A549 (cell line): ENCODE measurements at regions of chr3 and their contacts with region 1.

Region 1: DNA sequence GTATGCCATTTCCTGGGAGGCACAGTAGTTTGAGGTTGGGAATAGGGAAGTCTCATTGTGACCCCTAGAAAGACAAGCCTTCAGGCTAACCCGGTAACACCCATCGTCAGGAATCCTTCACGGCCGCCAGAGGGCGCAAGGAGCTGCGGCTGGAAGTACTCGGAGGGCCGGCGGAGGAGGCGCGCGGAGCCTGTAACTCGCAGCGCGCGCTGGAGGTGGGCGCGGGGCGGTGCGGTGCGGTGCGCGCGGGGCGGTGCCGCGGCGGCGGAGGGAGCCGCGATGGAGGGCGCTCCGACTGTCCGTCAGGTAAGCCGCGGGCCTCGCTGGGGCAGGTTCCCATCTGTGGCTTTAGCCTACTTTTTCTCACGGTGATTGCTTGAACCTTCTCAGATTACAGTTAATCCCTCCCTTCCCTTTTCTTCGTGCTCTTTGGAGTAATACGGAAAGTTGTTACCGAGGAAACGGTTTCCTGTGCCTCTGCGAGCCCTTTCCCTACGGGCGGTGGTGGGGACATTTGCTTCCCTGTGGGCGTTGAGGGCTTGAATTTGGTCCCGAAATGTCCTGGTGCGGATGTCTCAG is at the start of gene GRAMD1C:
- DNase-seq: peak; percentile 75 to 89
- ATAC-seq: peak; percentile 99 to 100
- H3K4me3 ChIP-seq: peak within 1 kb of the TSS; percentile 51
- H3K27ac ChIP-seq: peak within 1 kb of the TSS; percentile 44 to 78; a peak in 4 of 6 replicates
- H3K4me1 ChIP-seq: no peaks in the 10 kb centered on the region
- CTCF ChIP-seq: peak; percentile 87
- EP300 ChIP-seq: no peak
- POLR2A ChIP-seq: 0 out of 2 replicates have a peak, but pooled peaks have one; percentile 23
- RAD21 ChIP-seq: peak; percentile 68 to 76
- polyA plus RNA-seq, gene GRAMD1C: 0.59 and 0.87 TPM in 2 replicates

Region 2: GRCh38 chr3:113514265-113514769 is 324.4 kb before region 1 on chr3:
- CTCF ChIA-PET with region 1: no interaction called
- POLR2A ChIA-PET with region 1: no interaction called
- DNase-seq: no peak
- ATAC-seq: no peak; a peak in 3 of 6 replicates
- H3K4me3 ChIP-seq: peak overlapping the region; percentile 81
- H3K27ac ChIP-seq: peak overlapping the region; percentile 89 to 97
- H3K4me1 ChIP-seq: peaks cover 12% of the 10 kb centered on the region; the same call in 2 of the 3 replicates
- CTCF ChIP-seq: no peak
- EP300 ChIP-seq: no peak
- POLR2A ChIP-seq: no peak
- RAD21 ChIP-seq: no peak

Region 3: DNA sequence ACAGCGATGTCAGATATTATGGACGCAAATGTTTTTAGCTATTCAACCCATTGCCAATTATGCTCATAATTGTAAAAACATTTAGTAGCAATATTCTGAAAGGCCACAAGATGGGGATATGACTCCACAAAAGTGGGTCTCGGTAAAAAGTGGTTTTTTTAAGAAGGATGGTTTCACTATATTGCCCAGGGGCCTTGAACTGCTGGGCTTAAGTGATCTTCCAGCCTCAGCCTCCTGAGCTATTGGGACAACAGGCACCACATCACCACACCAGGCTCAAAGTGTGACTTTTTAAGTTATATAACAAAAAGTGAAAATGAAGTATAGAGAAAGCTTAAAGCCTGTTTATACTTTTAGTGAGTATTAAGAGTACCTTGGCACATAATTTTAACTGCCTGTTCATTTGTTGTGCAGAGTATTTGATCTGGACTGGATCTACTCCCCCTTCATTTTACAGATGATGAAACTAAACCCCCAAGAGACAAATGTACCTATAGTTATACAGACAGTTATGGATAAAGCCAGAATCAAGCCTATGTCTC is 102.1 kb before region 1 on chr3:
- CTCF ChIA-PET with region 1: interaction called, 11 read pairs
- POLR2A ChIA-PET with region 1: no interaction called
- DNase-seq: peak; percentile 25 to 57
- ATAC-seq: peak; percentile 81 to 88; a peak in 5 of 6 replicates
- H3K4me3 ChIP-seq: no peak overlapping the region
- H3K27ac ChIP-seq: no peak overlapping the region
- H3K4me1 ChIP-seq: peaks cover 37% of the 10 kb centered on the region; the same call in 2 of the 3 replicates
- CTCF ChIP-seq: peak; percentile 79
- EP300 ChIP-seq: no peak
- POLR2A ChIP-seq: no peak
- RAD21 ChIP-seq: peak; percentile 76 to 77

Region 4: GRCh38 chr3:113825090-113825489 is 13.6 kb before region 1 on chr3:
- CTCF ChIA-PET with region 1: interaction called, 32 read pairs
- POLR2A ChIA-PET with region 1: no interaction called
- DNase-seq: peak; percentile 33 to 42
- ATAC-seq: peak; percentile 74 to 89; a peak in 5 of 6 replicates
- H3K4me3 ChIP-seq: no peak overlapping the region
- H3K27ac ChIP-seq: no peak overlapping the region
- H3K4me1 ChIP-seq: 0 out of 3 replicates have a peak, but pooled peaks cover 2% of the 10 kb centered on the region
- CTCF ChIP-seq: no peak
- EP300 ChIP-seq: no peak
- POLR2A ChIP-seq: no peak
- RAD21 ChIP-seq: no peak

Region 5: GRCh38 chr3:113912552-113913236 is 74.0 kb after region 1 on chr3:
- CTCF ChIA-PET with region 1: interaction called, 34 read pairs
- POLR2A ChIA-PET with region 1: no interaction called
- DNase-seq: peak; percentile 24 to 78
- ATAC-seq: peak; percentile 91 to 94
- H3K4me3 ChIP-seq: no peak overlapping the region
- H3K27ac ChIP-seq: no peak overlapping the region
- H3K4me1 ChIP-seq: no peaks in the 10 kb centered on the region
- CTCF ChIP-seq: peak; percentile 80
- EP300 ChIP-seq: no peak
- POLR2A ChIP-seq: no peak
- RAD21 ChIP-seq: peak; percentile 86 to 87